Aorta (tissue), 5 donors: ENCODE measurements at regions of chr3 and their contacts with region 1.

Region 1: GRCh38 chr3:120506828-120507774 is 56.3 kb upstream of the FSTL1 start:
- DNase-seq: no peak
- ATAC-seq: peak; percentile 62
- H3K4me3 ChIP-seq: no peak overlapping the region
- H3K27ac ChIP-seq: peak overlapping the region in 1 of 2 donors; percentile 30
- H3K4me1 ChIP-seq: peaks cover 4 to 6% of the 10 kb centered on the region in 2 donors
- H3K27me3 ChIP-seq: no peaks in the 10 kb centered on the region

Region 2: GRCh38 chr3:120239644-120240043 is 267.5 kb before region 1 on chr3:
- intact Hi-C with region 1: loop called in 1 of 2 experiments (anchors 5 kb)
- DNase-seq: no peak
- ATAC-seq: no peak
- H3K4me3 ChIP-seq: no peak overlapping the region
- H3K27ac ChIP-seq: no peak overlapping the region
- H3K4me1 ChIP-seq: no peaks in the 10 kb centered on the region
- H3K27me3 ChIP-seq: no peaks in the 10 kb centered on the region

Region 3: DNA sequence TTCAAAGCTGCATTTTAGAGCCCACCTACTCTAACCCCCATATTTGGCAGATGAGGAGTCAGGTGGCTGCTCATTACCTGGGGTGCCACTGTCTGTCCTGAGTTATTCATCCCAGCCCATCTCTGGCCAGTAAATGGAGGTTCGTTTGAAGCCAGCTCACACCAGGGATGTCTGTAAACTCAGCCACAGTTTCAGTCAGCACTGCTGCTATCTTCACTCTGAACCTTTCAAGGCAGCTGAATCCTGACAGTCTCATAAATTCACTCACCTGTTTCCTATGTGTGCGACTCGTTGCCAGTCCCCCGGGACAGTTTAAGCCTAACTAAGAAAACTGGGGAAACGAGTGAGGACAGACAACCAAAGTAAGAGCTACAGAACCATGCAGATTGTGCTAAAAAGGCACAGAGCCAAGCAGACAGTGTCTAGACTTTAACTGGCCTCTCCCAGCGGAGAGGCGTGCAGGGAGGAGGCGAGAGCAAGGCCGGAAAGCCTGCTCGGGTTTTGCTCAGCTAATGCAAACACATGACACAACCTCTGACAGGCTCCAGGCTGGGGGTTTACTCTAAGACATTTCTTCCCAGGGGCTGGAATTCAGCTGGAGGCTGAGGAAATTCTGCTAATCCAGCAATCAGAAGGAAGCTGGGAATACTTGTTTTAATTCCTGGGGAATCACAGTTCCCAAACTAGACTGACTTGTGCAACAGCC is 68.3 kb before region 1 on chr3:
- intact Hi-C with region 1: no loop called
- DNase-seq: peak; percentile 82 to 87
- ATAC-seq: peak; percentile 88
- H3K4me3 ChIP-seq: no peak overlapping the region
- H3K27ac ChIP-seq: peak overlapping the region; percentile 68 to 95
- H3K4me1 ChIP-seq: peaks cover 10 to 31% of the 10 kb centered on the region in 2 donors
- H3K27me3 ChIP-seq: no peaks in the 10 kb centered on the region

Region 4: GRCh38 chr3:120469447-120469846 is 37.7 kb before region 1 on chr3:
- intact Hi-C with region 1: loop called in 1 of 2 experiments (anchors 1 kb)
- DNase-seq: no peak
- ATAC-seq: no peak
- H3K4me3 ChIP-seq: no peak overlapping the region
- H3K27ac ChIP-seq: no peak overlapping the region
- H3K4me1 ChIP-seq: peaks cover 2 to 3% of the 10 kb centered on the region in 2 donors
- H3K27me3 ChIP-seq: no peaks in the 10 kb centered on the region